ENCODE measurements at regions of chr7 and their contacts with region 1.

Region 1: GRCh38 chr7:17940302-17940883 is at the start of gene SNX13:
- DNase-seq: peak; percentile 80 to 89 (median 86)
- ATAC-seq: peak; percentile 97
- H3K4me3 ChIP-seq: peak within 1 kb of the TSS; percentile 90
- H3K4me3 Mint-ChIP-seq: peak within 1 kb of the TSS; percentile 98 to 99 (median 99)
- H3K27ac ChIP-seq: peak within 1 kb of the TSS; percentile 95
- H3K27ac Mint-ChIP-seq: peak within 1 kb of the TSS; percentile 91 to 99 (median 98)
- H3K4me1 ChIP-seq: peaks cover 12 to 19% of the 10 kb centered on the region in 2 donors
- H3K4me1 Mint-ChIP-seq: peaks cover 35 to 57% (median 50%) of the 10 kb centered on the region in 7 donors
- H3K27me3 ChIP-seq: no peaks in the 10 kb centered on the region
- H3K27me3 Mint-ChIP-seq: peaks cover 0 to 19% (median 0%) of the 10 kb centered on the region in 5 donors
- total RNA-seq, gene SNX13: 23.8 to 40.9 (median 29.0) TPM

Region 2: GRCh38 chr7:16420649-16421332 is 1519.6 kb before region 1 on chr7:
- CTCF ChIA-PET with region 1: no interaction called
- POLR2A ChIA-PET with region 1: no interaction called
- intact Hi-C with region 1: loop called (anchors 1 to 5 kb)
- DNase-seq: peak; percentile 71 to 93 (median 88)
- ATAC-seq: peak; percentile 93
- H3K4me3 ChIP-seq: peak overlapping the region; percentile 93
- H3K4me3 Mint-ChIP-seq: peak overlapping the region; percentile 82 to 96 (median 88)
- H3K27ac ChIP-seq: peak overlapping the region; percentile 78
- H3K27ac Mint-ChIP-seq: peak overlapping the region; percentile 84 to 98 (median 92)
- H3K4me1 ChIP-seq: peaks cover 6 to 9% of the 10 kb centered on the region in 2 donors
- H3K4me1 Mint-ChIP-seq: peaks cover 7 to 23% (median 15%) of the 10 kb centered on the region in 7 donors
- H3K27me3 ChIP-seq: no peaks in the 10 kb centered on the region
- H3K27me3 Mint-ChIP-seq: peaks cover 0 to 14% (median 0%) of the 10 kb centered on the region in 5 donors

Region 3: GRCh38 chr7:16926283-16926682 is 1014.1 kb before region 1 on chr7:
- CTCF ChIA-PET with region 1: no interaction called
- POLR2A ChIA-PET with region 1: no interaction called
- intact Hi-C with region 1: loop called in 1 of 2 experiments (anchors 10 kb)
- DNase-seq: no peak
- ATAC-seq: peak; percentile 78
- H3K4me3 ChIP-seq: no peak overlapping the region
- H3K4me3 Mint-ChIP-seq: no peak overlapping the region
- H3K27ac ChIP-seq: no peak overlapping the region
- H3K27ac Mint-ChIP-seq: peak overlapping the region in 1 of 9 donors; percentile 44
- H3K4me1 ChIP-seq: peaks cover 0 to 12% of the 10 kb centered on the region in 2 donors
- H3K4me1 Mint-ChIP-seq: peaks cover 6 to 52% (median 32%) of the 10 kb centered on the region in 7 donors
- H3K27me3 ChIP-seq: no peaks in the 10 kb centered on the region
- H3K27me3 Mint-ChIP-seq: peaks cover 0 to 5% (median 0%) of the 10 kb centered on the region in 5 donors

Region 4: DNA sequence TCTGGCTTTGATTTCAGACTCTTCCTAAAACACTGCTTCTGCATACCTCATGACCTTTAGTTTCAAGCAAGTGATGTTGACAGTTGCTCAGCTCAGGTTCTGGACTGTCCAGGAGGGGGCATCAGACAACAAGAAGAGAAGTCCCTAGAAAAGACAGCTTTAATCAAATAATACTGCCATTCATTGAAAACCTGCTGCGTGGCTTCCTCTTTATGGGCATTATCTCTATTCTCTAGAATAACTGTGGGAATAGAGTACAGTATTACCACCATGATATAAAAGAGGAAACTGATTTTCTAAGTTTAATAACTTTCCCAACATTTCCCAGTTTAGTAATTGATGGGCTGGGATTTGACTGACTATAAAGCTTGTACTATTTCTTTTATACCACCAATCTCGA is 170.5 kb before region 1 on chr7:
- CTCF ChIA-PET with region 1: no interaction called
- POLR2A ChIA-PET with region 1: no interaction called
- intact Hi-C with region 1: loop called in 1 of 2 experiments (anchors 5 kb)
- DNase-seq: peak in 8 of 9 donors; percentile 4 to 47 (median 30)
- ATAC-seq: peak; percentile 70
- H3K4me3 ChIP-seq: no peak overlapping the region
- H3K4me3 Mint-ChIP-seq: no peak overlapping the region
- H3K27ac ChIP-seq: no peak overlapping the region
- H3K27ac Mint-ChIP-seq: no peak overlapping the region
- H3K4me1 ChIP-seq: no peaks in the 10 kb centered on the region
- H3K4me1 Mint-ChIP-seq: peaks cover 0 to 4% (median 0%) of the 10 kb centered on the region in 7 donors
- H3K27me3 ChIP-seq: no peaks in the 10 kb centered on the region
- H3K27me3 Mint-ChIP-seq: no peaks in the 10 kb centered on the region

Region 5: DNA sequence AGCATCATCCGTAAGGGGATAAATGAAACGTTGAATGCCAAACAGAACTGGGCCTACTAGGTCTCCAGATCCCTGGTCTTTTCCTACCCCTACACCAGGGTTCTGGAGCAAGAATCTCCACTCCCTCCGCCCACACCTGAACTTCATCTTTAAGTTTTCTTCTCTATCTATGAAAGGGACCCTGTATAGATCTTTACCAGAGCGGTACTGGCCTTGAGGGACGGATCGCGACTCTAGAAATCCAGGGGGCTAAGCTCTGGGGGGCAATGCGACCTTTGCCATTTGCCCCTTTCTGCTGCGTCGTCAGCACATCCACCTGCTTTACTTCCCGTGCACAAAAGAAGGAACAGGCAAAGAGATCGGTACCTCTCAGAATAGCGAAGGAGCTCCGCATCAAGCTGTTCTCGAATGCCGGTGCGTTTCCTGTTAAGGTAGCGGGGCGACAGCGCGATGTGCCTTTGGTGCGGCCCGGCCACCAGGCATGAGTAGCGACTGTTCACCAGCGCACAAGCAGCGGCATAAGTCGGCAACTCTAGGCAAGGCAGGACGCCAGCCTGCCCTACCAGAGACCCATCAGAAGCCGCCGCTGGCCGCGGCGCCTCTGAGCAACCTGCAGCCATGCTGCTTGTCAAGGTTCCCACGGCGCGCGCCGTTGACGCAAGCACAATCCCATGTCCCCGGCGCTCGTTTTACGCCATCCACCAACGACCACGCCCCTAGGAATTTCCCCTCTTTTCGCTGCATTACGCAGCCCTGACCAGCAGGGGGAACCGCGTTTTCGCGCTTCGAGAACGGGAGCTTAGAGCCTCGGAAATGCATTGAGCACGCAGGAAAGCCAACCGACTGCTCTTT is 1768.2 kb after region 1 on chr7 and contains the start of gene POLR1F:
- CTCF ChIA-PET with region 1: no interaction called
- POLR2A ChIA-PET with region 1: no interaction called
- intact Hi-C with region 1: loop called (anchors 1 to 10 kb)
- DNase-seq: peak; percentile 84 to 97 (median 95)
- ATAC-seq: peak; percentile 98
- H3K4me3 ChIP-seq: peak within 1 kb of the TSS; percentile 70
- H3K4me3 Mint-ChIP-seq: peak within 1 kb of the TSS; percentile 95 to 99 (median 97)
- H3K27ac ChIP-seq: peak within 1 kb of the TSS; percentile 77
- H3K27ac Mint-ChIP-seq: peak within 1 kb of the TSS; percentile 89 to 98 (median 95)
- H3K4me1 ChIP-seq: peaks cover 19 to 23% of the 10 kb centered on the region in 2 donors
- H3K4me1 Mint-ChIP-seq: peaks cover 31 to 66% (median 57%) of the 10 kb centered on the region in 7 donors
- H3K27me3 ChIP-seq: no peaks in the 10 kb centered on the region
- H3K27me3 Mint-ChIP-seq: peaks cover 0 to 5% (median 0%) of the 10 kb centered on the region in 5 donors
- total RNA-seq, gene POLR1F: 11.8 to 27.3 (median 19.0) TPM